ENCODE measurements at regions of chr12 and their contacts with region 1.

Region 1: GRCh38 chr12:54368709-54369583 is 4.7 kb upstream of the GPR84 start:
- DNase-seq: peak; percentile 93
- ATAC-seq: peak; percentile 82
- H3K4me3 ChIP-seq: peak overlapping the region; percentile 30
- H3K27ac ChIP-seq: no peak overlapping the region
- H3K4me1 ChIP-seq: peaks cover 35% of the 10 kb centered on the region
- H3K27me3 ChIP-seq: no peaks in the 10 kb centered on the region
- CTCF ChIP-seq: peak; percentile 79

Region 2: GRCh38 chr12:54147186-54147585 is 221.8 kb before region 1 on chr12:
- intact Hi-C with region 1: no loop called
- DNase-seq: peak; percentile 73
- ATAC-seq: peak; percentile 66
- H3K4me3 ChIP-seq: no peak overlapping the region
- H3K27ac ChIP-seq: no peak overlapping the region
- H3K4me1 ChIP-seq: no peaks in the 10 kb centered on the region
- H3K27me3 ChIP-seq: no peaks in the 10 kb centered on the region
- CTCF ChIP-seq: no peak

Region 3: DNA sequence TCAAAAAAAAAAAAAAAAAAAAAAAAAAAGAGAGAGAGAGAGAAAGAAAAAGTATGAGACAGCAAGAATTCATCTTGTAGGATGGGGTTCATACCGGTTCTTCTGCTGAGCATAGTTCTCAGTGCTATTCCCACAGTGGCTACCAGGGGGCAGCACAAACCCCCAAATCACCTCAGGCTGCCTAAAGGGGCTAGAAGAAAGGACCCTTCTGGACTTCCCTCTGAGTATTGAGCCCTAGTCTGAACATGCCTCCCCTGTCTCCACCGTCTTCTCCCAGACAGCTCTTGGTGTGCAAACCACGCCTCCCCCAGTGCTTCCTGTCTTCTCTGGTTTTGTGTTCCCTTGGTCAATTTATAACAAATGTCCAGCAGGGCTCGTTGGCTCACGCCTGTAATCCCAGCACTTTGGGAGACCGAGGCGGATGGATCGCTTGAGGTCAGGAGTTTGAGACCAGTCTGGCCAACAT is 148.8 kb before region 1 on chr12:
- intact Hi-C with region 1: loop called (anchors 10 kb)
- DNase-seq: peak; percentile 61
- ATAC-seq: peak; percentile 76
- H3K4me3 ChIP-seq: no peak overlapping the region
- H3K27ac ChIP-seq: no peak overlapping the region
- H3K4me1 ChIP-seq: peaks cover 24% of the 10 kb centered on the region
- H3K27me3 ChIP-seq: peaks cover 18% of the 10 kb centered on the region
- CTCF ChIP-seq: peak; percentile 70

Region 4: GRCh38 chr12:54259194-54260011 is 109.5 kb before region 1 on chr12:
- intact Hi-C with region 1: loop called (anchors 10 kb)
- DNase-seq: peak; percentile 78
- ATAC-seq: peak; percentile 91
- H3K4me3 ChIP-seq: peak overlapping the region; percentile 41
- H3K27ac ChIP-seq: peak overlapping the region; percentile 76
- H3K4me1 ChIP-seq: peaks cover 34% of the 10 kb centered on the region
- H3K27me3 ChIP-seq: no peaks in the 10 kb centered on the region
- CTCF ChIP-seq: no peak